IMR-90 (cell line): ENCODE measurements at regions of chr17 and their contacts with region 1.

Region 1: GRCh38 chr17:33750943-33751701 is 458.0 kb upstream of the ASIC2 start:
- DNase-seq: peak; percentile 42
- ATAC-seq: peak; percentile 93
- H3K4me3 ChIP-seq: no peak overlapping the region
- H3K27ac ChIP-seq: no peak overlapping the region
- H3K4me1 ChIP-seq: no peaks in the 10 kb centered on the region
- H3K27me3 ChIP-seq: no peaks in the 10 kb centered on the region
- CTCF ChIP-seq: peak; percentile 90
- POLR2A ChIP-seq: no peak
- RAD21 ChIP-seq: peak; percentile 82

Region 2: GRCh38 chr17:32659419-32659842 is 1091.7 kb before region 1 on chr17:
- CTCF ChIA-PET with region 1: interaction called, 5 read pairs
- POLR2A ChIA-PET with region 1: no interaction called
- dilution Hi-C with region 1: no loop called
- in situ Hi-C with region 1: no loop called
- intact Hi-C with region 1: loop called (anchors 1 kb)
- DNase-seq: peak; percentile 55
- ATAC-seq: peak; percentile 95
- H3K4me3 ChIP-seq: no peak overlapping the region
- H3K27ac ChIP-seq: no peak overlapping the region
- H3K4me1 ChIP-seq: no peaks in the 10 kb centered on the region
- H3K27me3 ChIP-seq: no peaks in the 10 kb centered on the region; the same call in 1 of the 2 replicates
- CTCF ChIP-seq: peak; percentile 68
- POLR2A ChIP-seq: no peak
- RAD21 ChIP-seq: peak; percentile 44; the same call in 1 of the 2 replicates

Region 3: DNA sequence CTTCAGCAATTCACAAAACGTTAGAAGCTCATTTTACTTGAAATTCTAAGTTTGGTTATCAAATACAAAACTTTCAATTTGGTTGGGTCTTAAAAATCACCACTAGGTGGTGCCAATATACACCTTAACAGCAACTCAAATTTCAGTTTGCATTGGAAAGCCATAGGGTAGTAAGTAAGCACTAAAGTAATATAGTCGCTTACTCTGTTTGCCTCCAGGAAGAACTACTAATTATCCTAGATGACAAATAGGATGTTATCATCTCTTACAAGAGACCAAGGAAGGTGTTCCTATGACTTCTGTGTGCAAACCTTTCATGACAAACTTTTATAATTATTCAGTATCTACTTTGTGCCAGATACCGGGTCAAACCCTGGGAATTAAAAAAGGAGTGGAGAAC is 967.5 kb before region 1 on chr17:
- CTCF ChIA-PET with region 1: interaction called, 3 read pairs
- POLR2A ChIA-PET with region 1: no interaction called
- dilution Hi-C with region 1: no loop called
- in situ Hi-C with region 1: loop called (anchors 25 kb)
- intact Hi-C with region 1: loop called (anchors 1 kb)
- DNase-seq: peak; percentile 66
- ATAC-seq: peak; percentile 88
- H3K4me3 ChIP-seq: no peak overlapping the region
- H3K27ac ChIP-seq: no peak overlapping the region
- H3K4me1 ChIP-seq: no peaks in the 10 kb centered on the region
- H3K27me3 ChIP-seq: no peaks in the 10 kb centered on the region
- CTCF ChIP-seq: peak; percentile 87
- POLR2A ChIP-seq: 0 out of 2 replicates have a peak, but pooled peaks have one; percentile 35
- RAD21 ChIP-seq: peak; percentile 83

Region 4: GRCh38 chr17:32997753-32998632 is 753.1 kb before region 1 on chr17:
- CTCF ChIA-PET with region 1: no interaction called
- POLR2A ChIA-PET with region 1: no interaction called
- dilution Hi-C with region 1: no loop called
- in situ Hi-C with region 1: no loop called
- intact Hi-C with region 1: loop called (anchors 1 kb)
- DNase-seq: peak; percentile 68
- ATAC-seq: peak; percentile 96
- H3K4me3 ChIP-seq: no peak overlapping the region
- H3K27ac ChIP-seq: no peak overlapping the region
- H3K4me1 ChIP-seq: peaks cover 5% of the 10 kb centered on the region; the same call in 1 of the 2 replicates
- H3K27me3 ChIP-seq: peaks cover 17% of the 10 kb centered on the region; the same call in 1 of the 2 replicates
- CTCF ChIP-seq: peak; percentile 85
- POLR2A ChIP-seq: no peak
- RAD21 ChIP-seq: peak; percentile 62

Region 5: DNA sequence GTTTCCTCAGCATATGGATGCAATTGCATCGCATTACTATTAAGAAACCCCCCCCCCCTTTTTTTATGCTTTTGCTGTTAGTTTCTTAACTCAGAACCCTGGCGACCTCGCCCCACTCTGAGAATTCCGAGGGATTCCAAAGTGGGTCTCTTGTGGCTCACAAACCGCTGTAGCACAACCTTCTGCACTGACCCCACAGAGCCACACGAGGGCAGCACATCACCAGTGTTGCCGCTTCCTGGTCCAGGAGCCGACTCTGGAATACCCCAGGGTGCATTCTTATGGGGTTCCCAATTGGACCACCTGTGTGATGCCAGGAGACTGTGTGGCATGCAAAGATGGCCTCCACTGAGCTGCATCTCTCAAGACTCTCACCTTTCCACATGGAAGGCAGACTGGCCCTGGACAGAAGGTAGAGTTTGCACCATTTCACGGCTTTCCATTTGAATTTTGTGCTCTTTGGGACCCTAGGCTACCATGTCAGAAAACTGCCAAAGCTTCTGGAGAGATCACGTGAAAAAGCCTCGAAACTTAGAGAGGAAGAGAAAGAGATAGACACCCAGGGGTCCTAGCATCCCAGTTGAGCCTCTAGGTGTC is 25.3 kb before region 1 on chr17:
- CTCF ChIA-PET with region 1: interaction called, 4 read pairs
- POLR2A ChIA-PET with region 1: interaction called, 11 read pairs
- dilution Hi-C with region 1: no loop called
- in situ Hi-C with region 1: no loop called
- intact Hi-C with region 1: loop called (anchors 1 kb)
- DNase-seq: peak; percentile 17
- ATAC-seq: peak; percentile 81
- H3K4me3 ChIP-seq: no peak overlapping the region
- H3K27ac ChIP-seq: no peak overlapping the region
- H3K4me1 ChIP-seq: no peaks in the 10 kb centered on the region
- H3K27me3 ChIP-seq: no peaks in the 10 kb centered on the region; the same call in 1 of the 2 replicates
- CTCF ChIP-seq: peak; percentile 58
- POLR2A ChIP-seq: no peak
- RAD21 ChIP-seq: peak; percentile 42